Mammary epithelial cell (primary cell): ENCODE measurements at regions of chr2 and their contacts with region 1.

Region 1: GRCh38 chr2:26623541-26624396 is 17.4 kb downstream of the CIB4 start:
- DNase-seq: no peak
- H3K4me3 ChIP-seq: no peak overlapping the region
- H3K27ac ChIP-seq: no peak overlapping the region
- H3K4me1 ChIP-seq: no peaks in the 10 kb centered on the region
- H3K27me3 ChIP-seq: no peaks in the 10 kb centered on the region
- CTCF ChIP-seq: no peak

Region 2: GRCh38 chr2:26587994-26588393 is 35.8 kb before region 1 on chr2:
- CTCF ChIA-PET with region 1: no interaction called
- dilution Hi-C with region 1: no loop called
- in situ Hi-C with region 1: no loop called
- intact Hi-C with region 1: no loop called
- DNase-seq: no peak
- H3K4me3 ChIP-seq: no peak overlapping the region
- H3K27ac ChIP-seq: no peak overlapping the region
- H3K4me1 ChIP-seq: no peaks in the 10 kb centered on the region
- H3K27me3 ChIP-seq: no peaks in the 10 kb centered on the region
- CTCF ChIP-seq: no peak

Region 3: GRCh38 chr2:26727641-26728561 is 104.1 kb after region 1 on chr2:
- CTCF ChIA-PET with region 1: no interaction called
- dilution Hi-C with region 1: loop called (anchors 5 kb)
- in situ Hi-C with region 1: no loop called
- intact Hi-C with region 1: no loop called
- DNase-seq: no peak
- H3K4me3 ChIP-seq: no peak overlapping the region
- H3K27ac ChIP-seq: no peak overlapping the region
- H3K4me1 ChIP-seq: peaks cover 13% of the 10 kb centered on the region
- H3K27me3 ChIP-seq: no peaks in the 10 kb centered on the region
- CTCF ChIP-seq: no peak

Region 4: GRCh38 chr2:27264753-27265535 is 641.2 kb after region 1 on chr2:
- CTCF ChIA-PET with region 1: no interaction called
- dilution Hi-C with region 1: no loop called
- in situ Hi-C with region 1: no loop called
- intact Hi-C with region 1: no loop called
- DNase-seq: peak; percentile 39
- H3K4me3 ChIP-seq: no peak overlapping the region
- H3K27ac ChIP-seq: no peak overlapping the region
- H3K4me1 ChIP-seq: peaks cover 19% of the 10 kb centered on the region
- H3K27me3 ChIP-seq: peaks cover 48% of the 10 kb centered on the region
- CTCF ChIP-seq: peak; percentile 14 to 45